Panc1 (cell line): ENCODE measurements at regions of chr12 and their contacts with region 1.

Region 1: DNA sequence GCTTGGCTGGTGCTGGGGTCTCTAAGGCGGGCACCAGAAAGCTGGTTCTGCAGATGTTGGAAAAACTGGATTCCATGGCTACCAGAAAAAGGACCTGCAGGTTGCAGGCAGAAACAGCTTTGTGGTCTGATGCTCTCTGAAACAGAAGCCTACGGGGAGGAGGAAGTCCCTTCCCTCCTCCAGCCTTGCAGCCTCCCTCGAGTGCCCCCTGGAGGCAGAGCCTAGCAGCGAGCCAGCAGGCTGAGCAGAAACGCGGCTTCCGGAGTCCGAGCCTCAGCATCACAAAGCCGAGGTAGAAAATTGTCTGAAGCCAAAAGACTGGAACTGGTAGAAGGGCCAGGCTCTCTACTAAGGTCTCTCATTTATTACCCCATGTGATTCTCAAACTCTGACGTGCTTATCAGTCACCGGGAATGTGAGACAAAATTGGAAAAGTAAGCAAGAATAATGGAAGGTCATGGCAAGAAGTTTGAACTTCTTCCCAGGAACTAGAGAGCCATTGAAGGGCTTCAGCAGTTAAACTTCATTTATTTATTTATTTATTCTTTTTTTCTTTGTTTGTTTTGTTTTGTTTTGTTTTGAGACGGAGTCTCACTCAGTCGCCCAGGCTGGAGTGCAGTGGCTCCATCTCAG is 82.2 kb upstream of the CPSF6 start:
- DNase-seq: peak; percentile 45
- ATAC-seq: peak; percentile 95
- H3K4me3 ChIP-seq: peak overlapping the region in 1 of 2 experiments; percentile 25; a peak in 1 of 4 replicates
- H3K27ac ChIP-seq: peak overlapping the region; percentile 54
- H3K4me1 ChIP-seq: peaks cover 8% of the 10 kb centered on the region
- H3K27me3 ChIP-seq: no peaks in the 10 kb centered on the region
- CTCF ChIP-seq: peak; percentile 97

Region 2: DNA sequence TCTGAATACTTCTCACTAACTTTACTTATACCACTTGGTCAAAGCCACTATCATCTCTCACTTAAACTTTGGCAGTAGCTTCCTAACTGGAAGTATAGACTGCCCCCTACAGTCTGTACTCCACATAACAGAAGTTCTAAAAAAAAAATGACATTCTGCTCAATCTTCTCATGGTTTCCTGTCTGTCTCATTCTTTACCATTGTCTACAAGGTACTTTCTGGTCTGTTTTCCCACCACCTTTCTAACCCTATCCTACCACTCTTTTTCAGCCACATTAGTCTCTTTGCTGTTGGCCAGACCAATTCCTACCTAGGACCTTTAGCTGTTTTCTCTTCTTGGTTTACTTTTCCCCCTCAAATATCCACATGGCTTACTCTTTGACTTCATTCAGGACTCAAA is 96.9 kb after region 1 on chr12:
- CTCF ChIA-PET with region 1: no interaction called
- POLR2A ChIA-PET with region 1: no interaction called
- in situ Hi-C with region 1: no loop called
- intact Hi-C with region 1: loop called (anchors 5 kb)
- DNase-seq: peak; percentile 17
- ATAC-seq: no peak
- H3K4me3 ChIP-seq: no peak overlapping the region
- H3K27ac ChIP-seq: no peak overlapping the region
- H3K4me1 ChIP-seq: peaks cover 4% of the 10 kb centered on the region; the same call in 1 of the 2 replicates
- H3K27me3 ChIP-seq: no peaks in the 10 kb centered on the region
- CTCF ChIP-seq: peak; percentile 69; the same call in 1 of the 2 replicates